Heart left ventricle (tissue), 16 donors: ENCODE measurements at regions of chr22 and their contacts with region 1.

Region 1: DNA sequence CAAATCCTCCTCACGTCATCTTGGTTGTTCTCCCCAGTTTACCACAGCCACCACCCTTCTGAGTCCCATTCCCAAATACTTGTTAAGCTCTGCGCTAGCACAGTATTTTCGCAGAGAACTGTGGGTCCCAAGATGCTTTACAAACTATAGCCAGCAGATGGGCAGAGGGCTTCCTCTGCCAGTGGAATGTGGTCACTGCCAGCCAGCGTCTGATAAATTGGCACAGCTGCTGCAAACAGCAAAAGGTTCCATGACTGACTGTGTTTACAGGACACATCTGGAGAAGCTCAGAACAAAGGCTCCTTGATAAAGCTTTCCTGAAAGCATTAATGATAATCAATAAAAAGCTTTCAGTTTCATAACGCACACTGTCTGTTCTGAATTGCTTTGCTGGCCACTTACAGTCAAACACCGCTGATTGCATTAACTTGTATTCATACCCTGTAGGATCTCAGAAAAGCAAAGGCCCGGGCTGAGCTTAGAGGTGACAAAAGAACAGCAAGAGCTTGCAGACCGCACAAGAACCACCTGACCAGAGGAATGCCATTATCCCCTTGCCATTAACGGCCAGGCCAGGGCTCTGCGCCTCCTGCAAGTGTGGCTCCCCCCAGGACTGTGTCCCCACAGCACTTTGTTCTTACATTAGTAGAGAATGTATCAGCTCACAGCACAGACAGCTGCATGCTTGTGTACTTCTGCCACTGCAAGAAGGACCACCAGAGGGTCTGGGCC is 120.6 kb downstream of the MICAL3 start:
- DNase-seq: peak in 2 of 5 donors; percentile 56 to 59
- ATAC-seq: peak; percentile 47 to 64 (median 60)
- H3K4me3 ChIP-seq: no peak overlapping the region
- H3K27ac ChIP-seq: peak overlapping the region in 10 of 12 donors; percentile 24 to 92 (median 54)
- H3K4me1 ChIP-seq: peaks cover 0 to 57% (median 25%) of the 10 kb centered on the region in 12 donors
- H3K27me3 ChIP-seq: no peaks in the 10 kb centered on the region
- CTCF ChIP-seq: no peak
- POLR2A ChIP-seq: no peak

Region 2: DNA sequence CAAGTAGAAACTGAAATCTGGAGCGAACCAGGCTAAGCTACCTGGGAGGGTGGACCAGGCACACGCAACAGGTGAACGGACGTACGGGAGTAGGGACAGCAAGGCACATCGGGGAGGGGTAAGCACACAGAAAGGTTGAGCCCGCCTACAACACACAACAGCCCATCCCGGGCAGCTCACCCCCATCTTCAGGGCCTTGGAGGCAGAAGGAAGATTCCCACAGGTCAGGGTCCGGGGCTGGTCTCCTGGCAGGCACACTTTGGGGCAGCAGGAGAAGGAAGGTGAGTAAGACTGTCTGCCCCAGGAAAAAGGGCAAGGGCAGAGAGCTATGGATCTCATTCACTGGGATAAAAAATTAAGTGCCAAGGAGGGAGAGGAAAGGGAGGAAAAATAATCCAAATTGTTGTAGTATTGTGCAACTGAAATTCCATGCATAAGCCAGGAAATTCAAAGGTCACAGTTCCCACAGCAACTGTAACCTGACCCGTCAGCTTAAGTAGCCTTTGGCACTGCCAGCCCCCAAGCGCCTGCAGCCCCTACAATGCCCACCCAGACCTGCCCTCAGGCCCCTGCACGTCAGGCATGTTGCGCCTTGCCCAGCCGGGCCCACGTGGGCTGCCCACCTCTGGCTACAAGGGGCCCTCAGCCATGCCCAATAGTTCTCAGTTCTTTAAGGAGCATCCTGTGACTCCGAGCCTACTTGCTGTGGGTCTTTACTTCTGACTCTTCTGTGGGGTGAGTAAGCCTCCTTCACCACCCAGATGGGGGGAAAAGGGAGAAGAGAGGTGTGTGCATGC is 68.9 kb after region 1 on chr22:
- intact Hi-C with region 1: loop called in 1 of 10 experiments (anchors 2 kb)
- DNase-seq: peak in 1 of 5 donors; percentile 42
- ATAC-seq: peak in 3 of 4 donors; percentile 28 to 33 (median 33)
- H3K4me3 ChIP-seq: no peak overlapping the region
- H3K27ac ChIP-seq: peak overlapping the region in 9 of 12 donors; percentile 23 to 66 (median 51)
- H3K4me1 ChIP-seq: peaks cover 0 to 74% (median 46%) of the 10 kb centered on the region in 12 donors
- H3K27me3 ChIP-seq: no peaks in the 10 kb centered on the region
- CTCF ChIP-seq: no peak
- POLR2A ChIP-seq: no peak